Calu3 (cell line): ENCODE measurements at regions of chr15 and their contacts with region 1.

Region 1: GRCh38 chr15:62254137-62254934 is 89.3 kb upstream of the C2CD4B start:
- DNase-seq: peak; percentile 93
- H3K4me3 Mint-ChIP-seq: no peak overlapping the region
- H3K27ac Mint-ChIP-seq: no peak overlapping the region
- H3K4me1 Mint-ChIP-seq: peaks cover 33% of the 10 kb centered on the region
- H3K27me3 Mint-ChIP-seq: no peaks in the 10 kb centered on the region
- CTCF ChIP-seq: peak; percentile 94

Region 2: DNA sequence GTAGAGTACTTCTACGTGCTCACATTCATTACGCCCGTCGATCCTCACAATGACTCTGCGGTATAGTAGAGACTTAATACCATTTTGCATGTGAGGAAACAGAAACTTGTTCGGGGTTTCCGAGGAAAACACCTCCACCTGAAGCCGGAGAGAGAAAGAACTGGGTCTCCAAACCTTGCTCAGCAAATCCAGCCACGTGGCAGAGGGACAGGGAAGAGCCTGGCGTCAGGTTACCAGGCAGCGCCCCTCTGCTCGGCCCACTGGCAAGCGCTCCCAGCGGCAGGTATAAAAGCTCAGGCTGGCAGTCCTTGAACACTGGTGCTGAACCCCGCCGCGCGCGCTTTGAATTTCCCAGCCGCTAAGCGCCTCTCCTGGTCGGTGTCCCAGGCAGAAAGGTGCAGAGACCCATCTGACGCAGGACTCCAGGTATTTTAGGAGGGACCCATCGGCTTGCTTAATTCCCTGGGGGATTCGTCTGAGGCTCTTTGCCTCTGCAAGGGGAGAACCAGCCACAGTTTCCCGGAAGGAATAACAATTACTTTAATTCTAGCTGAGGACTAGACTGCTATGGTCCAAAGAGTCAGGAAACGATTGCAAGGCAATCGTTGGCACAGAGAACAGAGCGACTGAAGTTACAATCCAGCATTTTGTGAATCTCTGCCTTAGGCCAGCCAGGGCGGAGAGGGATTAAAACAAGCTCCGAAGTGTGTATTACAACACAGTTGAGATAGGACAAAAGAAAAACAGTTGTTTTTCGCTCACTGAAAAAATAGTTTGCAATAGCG is 187.5 kb before region 1 on chr15 and contains the start of gene C2CD4A:
- CTCF ChIA-PET with region 1: interaction called, 12 read pairs
- intact Hi-C with region 1: loop called (anchors 5 kb)
- DNase-seq: peak; percentile 96
- H3K4me3 Mint-ChIP-seq: peak within 1 kb of the TSS; percentile 89
- H3K27ac Mint-ChIP-seq: peak within 1 kb of the TSS; percentile 91
- H3K4me1 Mint-ChIP-seq: peaks cover 48% of the 10 kb centered on the region
- H3K27me3 Mint-ChIP-seq: no peaks in the 10 kb centered on the region
- CTCF ChIP-seq: no peak
- total RNA-seq, gene C2CD4A: 17.1 and 17.6 TPM in 2 replicates

Region 3: GRCh38 chr15:62115847-62116246 is 138.5 kb before region 1 on chr15:
- CTCF ChIA-PET with region 1: interaction called, 6 read pairs
- intact Hi-C with region 1: loop called (anchors 2 kb)
- DNase-seq: peak; percentile 38
- H3K4me3 Mint-ChIP-seq: no peak overlapping the region
- H3K27ac Mint-ChIP-seq: peak overlapping the region; percentile 65
- H3K4me1 Mint-ChIP-seq: peaks cover 90% of the 10 kb centered on the region
- H3K27me3 Mint-ChIP-seq: no peaks in the 10 kb centered on the region
- CTCF ChIP-seq: no peak

Region 4: DNA sequence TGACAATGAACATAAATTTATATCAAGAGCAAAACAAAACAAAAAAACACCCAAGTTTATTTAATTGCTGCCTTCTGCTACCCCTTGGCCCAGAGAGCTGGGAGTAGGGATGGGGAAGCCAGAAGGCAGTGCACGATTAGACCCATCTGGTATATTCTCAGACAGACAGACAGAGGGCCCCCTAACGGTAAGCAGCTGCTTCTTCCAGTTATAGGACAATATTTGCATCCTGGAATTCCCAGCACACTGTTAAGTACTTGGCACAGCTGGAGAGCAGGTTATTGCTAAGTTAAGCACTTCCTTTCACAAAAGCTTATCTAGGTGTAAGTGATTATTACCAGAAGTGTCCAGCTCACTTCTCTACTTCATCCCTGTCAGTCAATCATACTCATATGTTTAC is 128.6 kb before region 1 on chr15:
- CTCF ChIA-PET with region 1: interaction called, 35 read pairs
- intact Hi-C with region 1: loop called (anchors 2 kb)
- DNase-seq: peak; percentile 66
- H3K4me3 Mint-ChIP-seq: no peak overlapping the region
- H3K27ac Mint-ChIP-seq: peak overlapping the region; percentile 86
- H3K4me1 Mint-ChIP-seq: peaks cover 48% of the 10 kb centered on the region
- H3K27me3 Mint-ChIP-seq: no peaks in the 10 kb centered on the region
- CTCF ChIP-seq: peak; percentile 39

Region 5: GRCh38 chr15:62142731-62143130 is 111.6 kb before region 1 on chr15:
- CTCF ChIA-PET with region 1: interaction called, 10 read pairs
- intact Hi-C with region 1: no loop called
- DNase-seq: no peak
- H3K4me3 Mint-ChIP-seq: no peak overlapping the region
- H3K27ac Mint-ChIP-seq: no peak overlapping the region
- H3K4me1 Mint-ChIP-seq: peaks cover 20% of the 10 kb centered on the region
- H3K27me3 Mint-ChIP-seq: no peaks in the 10 kb centered on the region
- CTCF ChIP-seq: peak; percentile 46

Region 6: GRCh38 chr15:62165104-62165792 is 89.1 kb before region 1 on chr15 and contains the start of gene C2CD4B:
- CTCF ChIA-PET with region 1: interaction called, 18 read pairs
- intact Hi-C with region 1: loop called (anchors 2 kb)
- DNase-seq: peak; percentile 97
- H3K4me3 Mint-ChIP-seq: peak within 1 kb of the TSS; percentile 94
- H3K27ac Mint-ChIP-seq: peak within 1 kb of the TSS; percentile 96
- H3K4me1 Mint-ChIP-seq: peaks cover 42% of the 10 kb centered on the region
- H3K27me3 Mint-ChIP-seq: no peaks in the 10 kb centered on the region
- CTCF ChIP-seq: no peak
- total RNA-seq, gene C2CD4B: 18.8 and 29.9 TPM in 2 replicates

Region 7: DNA sequence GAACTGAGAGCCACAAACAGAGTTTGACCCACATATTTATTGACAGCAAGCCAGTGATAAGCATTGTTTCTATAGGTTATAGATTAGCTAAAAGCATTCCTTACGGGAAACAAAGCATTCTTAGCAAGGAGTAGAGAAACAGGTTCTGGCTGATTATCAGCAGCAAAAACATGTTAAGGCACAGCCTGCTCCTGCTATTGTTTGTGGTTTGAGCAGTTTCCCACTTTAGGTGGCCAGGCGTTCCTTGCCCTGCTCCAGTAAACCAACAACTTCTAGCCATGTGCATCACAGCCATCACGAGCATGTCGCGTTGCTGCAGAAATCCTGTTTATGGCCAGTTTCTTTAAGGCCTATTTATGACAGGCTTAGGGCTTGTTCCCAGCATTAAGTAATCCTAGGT is 44.5 kb before region 1 on chr15:
- CTCF ChIA-PET with region 1: interaction called, 14 read pairs
- intact Hi-C with region 1: loop called (anchors 2 kb)
- DNase-seq: peak; percentile 70
- H3K4me3 Mint-ChIP-seq: peak overlapping the region; percentile 65
- H3K27ac Mint-ChIP-seq: peak overlapping the region; percentile 85
- H3K4me1 Mint-ChIP-seq: peaks cover 31% of the 10 kb centered on the region
- H3K27me3 Mint-ChIP-seq: no peaks in the 10 kb centered on the region
- CTCF ChIP-seq: no peak

Region 8: DNA sequence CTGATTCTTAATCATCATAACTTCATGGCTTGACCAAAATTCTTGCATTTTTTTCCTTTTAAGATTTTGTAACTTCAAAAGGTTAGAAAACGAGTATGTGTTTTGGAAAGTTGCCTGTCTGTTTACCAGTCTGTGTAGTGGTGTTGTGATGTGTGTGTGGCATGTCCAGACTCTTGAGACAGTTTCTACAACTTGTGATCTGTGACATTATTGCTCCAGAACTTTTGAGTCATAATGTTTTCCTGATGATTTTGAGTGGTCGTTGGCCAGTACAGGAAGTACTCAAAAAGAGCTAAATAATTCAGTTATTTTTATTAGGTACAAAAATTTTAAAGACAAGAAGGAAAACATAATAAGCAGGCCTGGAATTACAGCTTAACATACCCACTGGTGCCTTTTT is 139.7 kb after region 1 on chr15:
- CTCF ChIA-PET with region 1: no interaction called
- intact Hi-C with region 1: no loop called
- DNase-seq: no peak
- H3K4me3 Mint-ChIP-seq: no peak overlapping the region
- H3K27ac Mint-ChIP-seq: no peak overlapping the region
- H3K4me1 Mint-ChIP-seq: peaks cover 18% of the 10 kb centered on the region
- H3K27me3 Mint-ChIP-seq: no peaks in the 10 kb centered on the region
- CTCF ChIP-seq: no peak